Lower leg skin (tissue), 4 donors: ENCODE measurements at regions of chr11 and their contacts with region 1.

Region 1: DNA sequence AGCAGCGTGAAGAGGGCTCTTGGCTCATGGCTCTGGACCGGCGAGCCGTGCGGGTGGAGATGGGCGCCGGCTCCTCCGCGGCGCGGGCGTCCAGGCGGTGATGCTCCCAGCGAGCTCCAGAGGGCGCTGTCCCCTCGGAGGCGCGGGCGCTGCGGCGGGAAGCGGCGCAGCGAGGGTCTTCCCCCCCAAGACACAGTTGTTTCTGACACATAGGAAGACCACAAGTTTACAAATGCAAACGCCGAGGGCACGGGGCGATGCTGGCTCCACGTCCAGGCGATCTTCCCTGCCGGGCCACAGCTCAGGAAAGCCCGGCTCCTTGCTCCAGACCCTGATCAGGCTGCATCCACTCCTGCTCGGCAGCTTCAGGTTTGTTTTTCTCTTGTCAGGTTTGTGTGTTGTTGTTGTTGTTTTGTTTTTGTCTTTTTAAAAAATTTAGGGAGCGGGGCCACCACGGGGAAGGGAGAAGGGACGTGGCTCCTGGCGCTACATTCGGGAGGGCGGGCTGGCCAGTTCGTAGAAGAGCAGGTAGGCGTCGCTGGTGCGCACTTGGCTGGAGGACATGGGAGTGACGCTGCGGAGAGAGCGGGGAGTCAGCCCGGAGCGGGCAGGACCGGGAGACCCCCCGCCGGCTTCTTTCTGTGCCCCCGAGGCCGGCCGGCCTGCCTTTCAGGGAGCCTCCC is 10.0 kb upstream of the MFRP start:
- DNase-seq: peak; percentile 70 to 96
- H3K4me3 ChIP-seq: no peak overlapping the region
- CTCF ChIP-seq: peak in 1 of 3 donors; percentile 32
- POLR2A ChIP-seq: no peak

Region 2: DNA sequence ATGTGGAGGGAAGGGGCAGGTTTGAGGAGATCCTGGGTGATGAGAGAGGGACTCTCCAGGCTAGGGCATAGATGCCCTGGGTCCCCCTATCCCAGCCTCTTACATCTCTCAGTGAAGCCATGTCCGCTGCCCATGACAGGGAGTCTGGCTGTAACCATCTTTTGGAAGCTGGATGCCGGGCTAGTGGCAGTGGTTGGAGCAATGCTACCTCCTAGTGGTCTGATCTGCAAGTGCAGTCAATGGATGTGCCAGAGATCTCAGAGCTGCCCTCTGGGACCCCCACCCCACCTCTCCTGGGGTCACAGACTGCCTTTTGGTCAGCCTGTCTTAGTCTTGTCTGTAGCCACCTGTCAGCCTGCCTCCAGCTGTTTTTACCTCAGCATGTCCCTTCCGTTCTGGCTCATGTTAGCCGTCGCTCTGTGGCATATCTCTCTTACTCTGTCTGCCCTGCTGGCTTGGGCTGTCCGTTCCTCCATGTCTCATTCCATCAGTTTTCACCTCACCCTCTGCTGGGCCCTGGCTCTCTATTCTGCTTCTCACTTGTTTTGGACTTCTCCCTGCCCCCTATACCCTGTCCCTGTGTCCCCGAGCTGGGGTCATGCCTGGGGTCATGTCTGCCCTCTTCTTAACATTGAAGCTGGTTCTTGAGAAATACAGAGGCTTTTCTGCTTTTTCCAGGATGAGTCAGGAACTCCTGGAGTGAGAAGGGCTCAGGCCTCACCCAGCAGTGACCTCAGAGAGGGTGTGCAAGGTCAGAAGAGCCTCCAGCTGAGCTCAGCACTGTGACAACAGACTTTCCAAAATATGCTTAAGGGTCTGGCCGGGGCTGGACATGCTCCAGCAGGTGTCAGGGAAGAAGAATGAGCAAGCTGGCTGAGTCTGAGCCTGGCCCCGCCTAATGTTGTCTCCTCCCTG is 118.4 kb after region 1 on chr11:
- intact Hi-C with region 1: loop called (anchors 5 kb)
- DNase-seq: peak; percentile 73 to 93
- H3K4me3 ChIP-seq: no peak overlapping the region
- CTCF ChIP-seq: no peak
- POLR2A ChIP-seq: no peak